WTC11 (cell line): ENCODE measurements at regions of chr18 and their contacts with region 1.

Region 1: DNA sequence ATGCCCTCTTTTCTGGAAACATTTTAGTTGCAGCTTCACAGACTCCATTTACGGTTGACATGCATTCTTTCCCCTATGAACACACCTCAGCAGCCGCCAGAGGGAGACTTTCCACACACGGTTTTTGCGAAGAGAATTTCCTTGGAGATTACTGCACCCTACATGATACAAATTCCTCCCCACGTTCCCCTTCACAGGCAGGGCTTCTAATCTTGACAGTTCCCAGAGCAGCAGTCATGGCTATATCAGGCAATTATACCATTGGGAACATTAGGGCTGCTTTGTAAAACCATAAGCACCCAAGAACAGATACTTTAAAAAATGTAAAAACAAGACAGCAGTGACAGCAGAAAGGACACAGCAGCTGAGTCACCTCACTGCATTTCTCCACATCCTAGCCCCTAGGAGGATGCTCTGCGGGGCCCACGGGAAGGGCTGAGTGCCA is 253.8 kb downstream of the TGIF1 start:
- DNase-seq: peak; percentile 65
- ATAC-seq: peak; percentile 83
- H3K4me3 Mint-ChIP-seq: no peak overlapping the region
- H3K27ac Mint-ChIP-seq: peak overlapping the region; percentile 39; the same call in 1 of the 2 replicates
- H3K4me1 Mint-ChIP-seq: peaks cover 8% of the 10 kb centered on the region
- H3K27me3 Mint-ChIP-seq: no peaks in the 10 kb centered on the region; the same call in 1 of the 2 replicates
- CTCF ChIP-seq: peak; percentile 50

Region 2: DNA sequence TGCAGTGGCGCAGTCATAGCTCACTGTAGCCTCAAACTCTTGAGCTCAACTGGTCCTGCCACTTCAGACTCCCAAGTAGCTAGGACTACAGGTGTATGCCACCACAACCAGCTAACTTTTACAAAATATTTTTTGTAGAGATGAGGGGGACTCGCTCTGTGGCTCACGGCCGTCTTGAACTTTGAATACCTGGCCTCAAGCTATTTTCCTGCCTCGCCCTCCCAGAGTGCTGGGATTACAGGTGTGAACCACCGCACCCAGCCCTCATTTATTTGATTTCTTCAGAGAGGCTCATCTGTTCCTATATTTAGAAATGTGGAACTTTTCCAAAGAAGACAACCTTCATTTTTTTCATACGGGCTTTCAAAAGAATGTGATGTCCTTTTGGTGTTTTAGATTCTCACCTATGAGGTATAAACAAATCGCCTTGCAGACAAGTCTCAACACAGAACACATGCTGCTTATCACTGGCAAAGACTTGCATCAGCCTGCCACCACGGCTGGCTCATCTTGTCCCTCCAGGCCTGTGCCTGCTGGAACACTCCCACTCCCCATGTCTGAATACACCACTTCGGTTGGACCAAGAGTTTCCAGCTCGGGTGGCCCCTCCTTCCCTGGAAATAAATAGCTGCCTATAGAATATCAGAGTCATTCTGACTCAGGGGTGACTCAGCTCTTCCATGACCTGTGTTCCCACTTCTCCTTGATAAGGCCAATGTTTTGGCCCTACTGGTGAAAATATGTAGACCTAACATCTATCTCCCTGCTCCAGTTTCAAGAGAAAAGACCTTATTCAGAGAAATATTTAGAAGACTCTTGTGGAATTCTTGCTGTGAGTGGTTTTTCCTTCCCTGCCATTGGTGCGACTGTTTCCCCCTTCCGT is 51.1 kb before region 1 on chr18:
- CTCF ChIA-PET with region 1: no interaction called
- POLR2A ChIA-PET with region 1: no interaction called
- DNase-seq: no peak
- ATAC-seq: peak; percentile 59
- H3K4me3 Mint-ChIP-seq: no peak overlapping the region
- H3K27ac Mint-ChIP-seq: peak overlapping the region; percentile 57
- H3K4me1 Mint-ChIP-seq: peaks cover 58% of the 10 kb centered on the region
- H3K27me3 Mint-ChIP-seq: peaks cover 31% of the 10 kb centered on the region
- CTCF ChIP-seq: no peak

Region 3: DNA sequence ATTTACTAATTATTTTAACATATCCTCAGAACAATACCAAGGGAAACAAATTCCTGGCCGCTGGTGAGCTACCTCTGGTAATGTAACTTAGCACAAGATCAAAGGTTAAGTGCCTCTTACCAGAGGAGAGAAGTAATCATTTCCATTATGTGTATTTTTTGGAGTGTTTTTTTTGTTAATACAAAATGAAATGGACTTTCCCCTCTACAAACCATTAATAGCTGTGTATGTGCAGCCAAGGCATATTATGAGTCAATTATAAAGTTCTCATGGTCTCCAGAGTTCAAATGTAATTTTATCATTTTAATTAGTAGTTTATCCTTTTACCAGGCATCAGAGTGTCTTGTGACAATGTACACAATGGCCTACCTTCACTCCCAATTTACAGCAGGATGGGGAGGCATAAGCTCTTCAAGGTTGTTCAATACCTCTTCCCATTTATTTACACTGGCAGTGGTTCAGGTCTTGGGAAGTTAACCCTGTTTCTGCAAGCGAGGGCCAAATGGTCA is 11.6 kb before region 1 on chr18:
- CTCF ChIA-PET with region 1: interaction called, 20 read pairs
- POLR2A ChIA-PET with region 1: no interaction called
- DNase-seq: no peak
- ATAC-seq: no peak
- H3K4me3 Mint-ChIP-seq: no peak overlapping the region
- H3K27ac Mint-ChIP-seq: no peak overlapping the region
- H3K4me1 Mint-ChIP-seq: peaks cover 16% of the 10 kb centered on the region
- H3K27me3 Mint-ChIP-seq: no peaks in the 10 kb centered on the region; the same call in 1 of the 2 replicates
- CTCF ChIP-seq: no peak

Region 4: DNA sequence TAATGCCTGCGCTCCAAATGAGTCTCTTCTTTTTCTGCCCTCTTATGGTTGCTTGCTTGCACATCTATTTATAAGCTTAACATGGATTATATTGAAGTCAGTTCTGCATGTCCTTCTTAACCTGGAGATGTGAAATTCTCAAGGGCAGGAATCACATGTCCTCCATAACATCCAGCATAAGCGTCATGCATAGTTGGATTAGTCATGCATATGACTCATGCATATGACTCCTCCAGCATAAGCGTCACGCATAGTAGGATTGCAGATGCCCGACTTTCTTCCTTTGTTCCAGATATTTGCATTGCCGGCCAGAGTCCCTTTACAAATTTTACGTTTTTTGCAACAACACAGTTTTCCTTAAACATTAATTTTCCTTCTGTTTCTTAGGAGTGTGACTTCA is 54.8 kb after region 1 on chr18:
- CTCF ChIA-PET with region 1: no interaction called
- POLR2A ChIA-PET with region 1: no interaction called
- DNase-seq: no peak
- ATAC-seq: no peak
- H3K4me3 Mint-ChIP-seq: no peak overlapping the region
- H3K27ac Mint-ChIP-seq: no peak overlapping the region
- H3K4me1 Mint-ChIP-seq: peaks cover 11% of the 10 kb centered on the region
- H3K27me3 Mint-ChIP-seq: no peaks in the 10 kb centered on the region
- CTCF ChIP-seq: no peak

Region 5: DNA sequence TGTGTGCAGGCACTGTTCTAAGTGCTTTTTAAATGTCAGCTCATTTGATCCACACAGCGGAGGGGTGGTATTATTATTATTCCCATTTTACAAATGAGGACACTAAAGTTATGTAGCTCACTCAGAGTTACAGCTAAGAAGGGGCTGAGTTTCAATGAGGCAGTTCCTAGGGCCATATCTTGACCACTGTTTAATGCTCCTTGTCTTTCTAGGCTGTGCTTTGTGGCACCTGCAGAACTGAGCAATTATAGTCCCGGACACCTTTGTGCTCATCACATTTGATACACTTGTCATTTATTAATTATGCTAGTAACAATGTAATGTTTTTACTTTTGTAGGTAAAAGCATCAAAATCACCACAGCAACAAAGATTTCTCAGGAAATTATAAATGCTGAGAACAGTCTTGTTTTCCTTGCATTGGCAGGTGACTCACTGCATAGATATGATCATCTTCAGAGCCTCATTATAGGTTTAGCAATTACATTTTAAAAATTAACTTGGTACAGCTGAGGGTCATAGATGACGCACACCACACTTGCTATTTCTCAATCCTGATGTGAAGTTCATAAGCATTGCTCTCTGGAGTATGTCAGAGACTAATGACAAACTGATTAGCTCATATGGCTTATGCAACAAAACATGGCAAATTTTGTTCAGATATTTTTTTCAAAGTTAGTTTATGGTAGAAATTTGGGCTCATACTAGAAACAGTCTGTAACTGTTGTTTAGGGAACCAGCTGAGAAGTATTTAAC is 113.0 kb after region 1 on chr18:
- CTCF ChIA-PET with region 1: no interaction called
- POLR2A ChIA-PET with region 1: no interaction called
- DNase-seq: no peak
- ATAC-seq: no peak
- H3K4me3 Mint-ChIP-seq: no peak overlapping the region
- H3K27ac Mint-ChIP-seq: no peak overlapping the region
- H3K4me1 Mint-ChIP-seq: peaks cover 15% of the 10 kb centered on the region
- H3K27me3 Mint-ChIP-seq: no peaks in the 10 kb centered on the region
- CTCF ChIP-seq: no peak

Region 6: DNA sequence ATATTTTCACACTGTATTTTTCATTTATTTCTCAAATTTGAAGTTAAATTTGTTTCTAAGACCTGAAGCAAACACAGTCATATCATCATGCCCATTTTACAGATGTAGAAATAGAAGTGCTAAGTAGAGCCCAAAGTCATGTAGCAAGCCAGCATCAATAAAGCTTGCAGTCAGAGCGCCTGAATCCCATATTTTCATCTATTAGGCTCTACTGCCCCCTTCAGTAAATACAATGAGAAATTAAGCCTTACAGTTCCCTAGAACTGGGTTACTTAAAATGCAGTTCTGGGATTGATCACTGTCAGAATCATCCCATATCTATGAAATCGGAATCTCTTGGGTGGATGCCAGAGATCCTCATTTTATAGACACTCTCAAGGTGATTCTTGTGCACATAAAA is 166.1 kb after region 1 on chr18:
- CTCF ChIA-PET with region 1: interaction called, 37 read pairs
- POLR2A ChIA-PET with region 1: no interaction called
- DNase-seq: no peak
- ATAC-seq: peak; percentile 71
- H3K4me3 Mint-ChIP-seq: no peak overlapping the region
- H3K27ac Mint-ChIP-seq: no peak overlapping the region
- H3K4me1 Mint-ChIP-seq: peaks cover 42% of the 10 kb centered on the region
- H3K27me3 Mint-ChIP-seq: no peaks in the 10 kb centered on the region
- CTCF ChIP-seq: 0 out of 2 replicates have a peak, but pooled peaks have one; percentile 28

Region 7: DNA sequence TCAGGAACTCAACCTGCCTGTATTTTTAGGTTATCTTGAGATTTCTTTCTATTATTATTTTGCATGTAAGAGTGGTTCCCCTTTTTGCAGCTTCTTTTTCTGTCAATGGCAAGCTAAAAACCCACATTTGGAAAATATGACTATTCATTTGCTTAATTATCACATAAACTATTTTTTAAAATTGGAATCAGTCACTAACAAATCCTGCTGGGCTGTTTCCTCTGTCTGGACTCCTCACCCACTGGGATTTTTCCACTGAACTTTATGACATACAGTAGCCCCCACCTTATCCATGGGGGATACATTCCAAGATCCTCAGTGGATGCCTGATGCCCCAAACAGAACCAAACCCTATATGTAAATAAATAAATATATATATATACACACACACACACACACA is 304.1 kb after region 1 on chr18:
- CTCF ChIA-PET with region 1: no interaction called
- POLR2A ChIA-PET with region 1: no interaction called
- DNase-seq: no peak
- ATAC-seq: no peak
- H3K4me3 Mint-ChIP-seq: no peak overlapping the region
- H3K27ac Mint-ChIP-seq: no peak overlapping the region
- H3K4me1 Mint-ChIP-seq: peaks cover 26% of the 10 kb centered on the region
- H3K27me3 Mint-ChIP-seq: no peaks in the 10 kb centered on the region
- CTCF ChIP-seq: no peak